PC-9 (cell line): ENCODE measurements at regions of chr17 and their contacts with region 1.

Region 1: GRCh38 chr17:80147035-80147836 is at the start of gene EIF4A3:
- DNase-seq: peak; percentile 91 to 97
- H3K4me3 ChIP-seq: peak within 1 kb of the TSS; percentile 88
- H3K27ac ChIP-seq: peak within 1 kb of the TSS; percentile 55
- H3K4me1 ChIP-seq: peaks cover 30% of the 10 kb centered on the region
- H3K27me3 ChIP-seq: no peaks in the 10 kb centered on the region
- CTCF ChIP-seq: no peak
- total RNA-seq, gene EIF4A3: 114 and 125 TPM in 2 replicates

Region 2: GRCh38 chr17:79905832-79906231 is 241.4 kb before region 1 on chr17:
- CTCF ChIA-PET with region 1: no interaction called
- POLR2A ChIA-PET with region 1: no interaction called
- intact Hi-C with region 1: no loop called
- DNase-seq: peak; percentile 54 to 76
- H3K4me3 ChIP-seq: no peak overlapping the region
- H3K27ac ChIP-seq: no peak overlapping the region
- H3K4me1 ChIP-seq: peaks cover 4% of the 10 kb centered on the region; the same call in 1 of the 2 replicates
- H3K27me3 ChIP-seq: no peaks in the 10 kb centered on the region
- CTCF ChIP-seq: peak; percentile 63

Region 3: GRCh38 chr17:80101011-80101945 is 46.0 kb before region 1 on chr17 and contains the start of gene GAA:
- CTCF ChIA-PET with region 1: no interaction called
- POLR2A ChIA-PET with region 1: no interaction called
- intact Hi-C with region 1: loop called (anchors 5 kb)
- DNase-seq: peak; percentile 36 to 89
- H3K4me3 ChIP-seq: peak within 1 kb of the TSS; percentile 82
- H3K27ac ChIP-seq: no peak within 1 kb of the TSS
- H3K4me1 ChIP-seq: no peaks in the 10 kb centered on the region
- H3K27me3 ChIP-seq: no peaks in the 10 kb centered on the region
- CTCF ChIP-seq: peak; percentile 61; the same call in 1 of the 2 replicates
- total RNA-seq, gene GAA: 86.9 and 126 TPM in 2 replicates

Region 4: DNA sequence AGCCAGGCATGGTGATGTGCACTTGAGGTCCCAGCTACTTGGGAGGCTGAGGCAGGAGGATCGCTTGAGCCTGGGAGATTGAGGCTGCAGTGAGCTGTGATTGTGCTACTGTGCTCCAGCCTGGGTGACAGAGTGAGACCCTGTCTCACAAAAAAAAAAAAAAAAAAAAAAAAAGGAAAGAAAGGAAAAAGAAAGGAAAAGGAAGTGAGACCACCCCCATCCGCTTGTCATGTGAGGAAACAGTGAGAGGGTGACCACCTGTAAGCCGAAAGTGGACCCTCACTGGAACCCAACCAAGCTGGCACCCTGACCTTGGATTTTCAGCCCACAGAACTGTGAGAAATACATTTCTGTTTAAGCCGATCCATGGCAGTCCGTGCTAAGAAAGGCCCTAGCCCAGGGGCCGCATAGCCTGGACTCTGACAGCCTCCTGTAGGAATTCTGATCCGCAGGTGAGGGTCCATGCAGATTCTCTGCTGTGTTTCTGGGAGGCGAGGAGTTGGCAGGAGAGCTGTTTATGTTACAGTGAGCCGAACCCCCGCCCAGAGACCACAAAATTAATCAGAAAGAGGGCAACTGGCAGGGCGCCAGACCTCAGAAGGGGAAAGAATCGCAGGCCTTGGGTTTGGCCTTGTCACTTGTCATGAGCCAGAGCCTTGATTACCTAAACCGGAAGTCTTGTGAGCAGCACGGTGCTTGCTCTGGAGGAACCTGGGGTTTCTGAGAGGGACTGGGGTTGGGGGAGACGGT is 72.0 kb after region 1 on chr17:
- CTCF ChIA-PET with region 1: no interaction called
- POLR2A ChIA-PET with region 1: no interaction called
- intact Hi-C with region 1: loop called (anchors 1 kb)
- DNase-seq: peak; percentile 58 to 81
- H3K4me3 ChIP-seq: peak overlapping the region; percentile 71
- H3K27ac ChIP-seq: no peak overlapping the region
- H3K4me1 ChIP-seq: peaks cover 6% of the 10 kb centered on the region; the same call in 1 of the 2 replicates
- H3K27me3 ChIP-seq: no peaks in the 10 kb centered on the region
- CTCF ChIP-seq: no peak